ENCODE measurements at regions of chr15 and their contacts with region 1.

Region 1: GRCh38 chr15:41660235-41661077 is at the start of gene MGA:
- DNase-seq: peak; percentile 90 to 94 (median 92)
- H3K4me3 ChIP-seq: peak within 1 kb of the TSS; percentile 71 to 72
- H3K4me3 Mint-ChIP-seq: peak within 1 kb of the TSS; percentile 84 to 96 (median 94)
- H3K27ac ChIP-seq: peak within 1 kb of the TSS; percentile 67
- H3K27ac Mint-ChIP-seq: peak within 1 kb of the TSS; percentile 91 to 99 (median 97)
- H3K4me1 ChIP-seq: peaks cover 59% of the 10 kb centered on the region
- H3K4me1 Mint-ChIP-seq: peaks cover 30 to 65% (median 43%) of the 10 kb centered on the region in 4 donors
- H3K27me3 ChIP-seq: no peaks in the 10 kb centered on the region
- H3K27me3 Mint-ChIP-seq: peaks cover 0 to 1% of the 10 kb centered on the region in 2 donors
- total RNA-seq, gene MGA: 70.1 to 74.9 TPM

Region 2: GRCh38 chr15:40564591-40565332 is 1095.7 kb before region 1 on chr15 and contains the start of gene CCDC32:
- CTCF ChIA-PET with region 1: no interaction called
- POLR2A ChIA-PET with region 1: no interaction called
- intact Hi-C with region 1: loop called (anchors 5 kb)
- DNase-seq: peak; percentile 93 to 98 (median 96)
- H3K4me3 ChIP-seq: peak within 1 kb of the TSS; percentile 97 to 98
- H3K4me3 Mint-ChIP-seq: peak within 1 kb of the TSS; percentile 95 to 98 (median 97)
- H3K27ac ChIP-seq: peak within 1 kb of the TSS; percentile 92
- H3K27ac Mint-ChIP-seq: peak within 1 kb of the TSS; percentile 89 to 99 (median 98)
- H3K4me1 ChIP-seq: peaks cover 34% of the 10 kb centered on the region
- H3K4me1 Mint-ChIP-seq: peaks cover 26 to 65% (median 42%) of the 10 kb centered on the region in 4 donors
- H3K27me3 ChIP-seq: no peaks in the 10 kb centered on the region
- H3K27me3 Mint-ChIP-seq: no peaks in the 10 kb centered on the region
- total RNA-seq, gene CCDC32: 31.7 to 32.4 TPM

Region 3: DNA sequence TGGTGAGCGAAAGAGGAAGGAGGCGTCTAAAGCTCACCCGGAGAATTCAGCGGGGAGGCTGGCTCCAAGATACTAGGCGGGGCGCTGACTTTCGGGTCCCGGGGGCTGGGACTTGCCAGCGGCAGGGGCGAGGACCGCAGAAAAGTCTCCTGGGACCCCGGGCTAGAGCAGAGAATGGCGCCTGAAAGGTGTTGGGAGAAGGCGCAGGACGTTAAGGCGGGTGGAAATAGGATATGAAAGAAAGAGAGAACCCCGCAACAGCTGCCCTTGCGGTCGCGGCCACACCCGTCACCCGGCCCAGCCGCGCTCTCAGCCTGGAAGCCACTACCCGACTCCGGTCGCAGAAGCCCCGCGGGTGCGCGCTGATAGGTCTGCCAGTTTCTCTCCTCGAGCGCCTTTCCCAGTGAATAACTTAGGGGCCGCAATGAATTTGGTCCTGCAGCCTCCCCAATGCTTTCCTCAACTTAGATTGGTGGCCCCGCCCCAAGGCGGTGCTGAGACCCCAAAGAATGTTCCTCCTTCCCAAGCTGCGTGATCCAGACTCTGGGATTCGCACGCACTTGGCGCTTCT is 147.4 kb before region 1 on chr15:
- CTCF ChIA-PET with region 1: no interaction called
- POLR2A ChIA-PET with region 1: no interaction called
- intact Hi-C with region 1: no loop called
- DNase-seq: peak in 2 of 5 donors; percentile 26 to 38
- H3K4me3 ChIP-seq: peak overlapping the region; percentile 52 to 57
- H3K4me3 Mint-ChIP-seq: peak overlapping the region; percentile 81 to 86 (median 83)
- H3K27ac ChIP-seq: no peak overlapping the region
- H3K27ac Mint-ChIP-seq: peak overlapping the region in 6 of 7 donors; percentile 65 to 75 (median 68)
- H3K4me1 ChIP-seq: peaks cover 27% of the 10 kb centered on the region
- H3K4me1 Mint-ChIP-seq: peaks cover 6 to 33% (median 24%) of the 10 kb centered on the region in 4 donors
- H3K27me3 ChIP-seq: peaks cover 17% of the 10 kb centered on the region
- H3K27me3 Mint-ChIP-seq: peaks cover 10 to 13% of the 10 kb centered on the region in 2 donors

Region 4: DNA sequence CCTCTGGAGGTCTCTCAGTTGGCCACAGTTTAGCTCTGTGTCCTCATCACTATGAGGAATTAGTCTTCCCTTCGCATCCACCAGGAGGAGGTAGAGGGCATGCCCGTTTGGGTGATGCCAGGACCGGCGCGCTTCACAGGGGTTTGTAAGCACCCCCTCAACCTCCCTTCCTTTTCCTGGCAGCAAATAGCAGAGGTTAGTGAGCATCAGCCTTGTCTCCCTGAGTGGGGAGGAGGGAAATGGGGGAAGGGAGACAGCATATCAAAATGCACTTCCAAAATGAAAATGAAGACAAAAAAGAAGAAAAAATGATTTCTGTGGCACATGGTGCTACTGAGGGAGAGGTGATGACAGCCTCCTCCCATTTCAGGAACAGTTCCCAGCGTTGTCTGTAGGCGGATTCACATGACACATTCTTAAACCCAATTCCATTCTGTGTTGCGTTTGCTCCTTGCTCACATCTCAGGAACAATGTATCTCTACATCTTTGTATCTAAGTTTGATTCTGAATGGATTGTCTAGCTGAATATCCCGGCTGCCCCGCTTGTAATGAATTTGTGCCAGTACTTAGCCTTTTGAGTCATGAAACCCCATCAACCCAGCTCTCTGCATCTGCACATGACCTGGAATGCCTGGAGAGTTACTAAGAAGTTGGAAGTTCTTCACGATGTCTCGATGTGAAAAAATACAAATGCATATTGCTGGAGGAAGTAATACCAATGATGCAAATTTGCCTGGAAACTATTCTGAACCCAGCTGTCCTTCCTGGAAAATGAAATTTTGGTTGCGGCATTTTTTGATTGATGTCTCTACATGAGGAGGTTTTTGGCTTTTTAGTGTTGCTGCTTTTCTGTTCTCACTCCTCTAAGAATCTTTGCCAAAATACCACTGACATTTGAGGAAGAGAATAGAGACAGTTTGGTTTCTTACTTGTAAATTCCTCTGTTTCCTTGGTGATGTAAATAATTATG is 56.2 kb before region 1 on chr15:
- CTCF ChIA-PET with region 1: interaction called, 22 read pairs
- POLR2A ChIA-PET with region 1: interaction called, 6 read pairs
- intact Hi-C with region 1: loop called (anchors 1 kb)
- DNase-seq: peak; percentile 53 to 58 (median 53)
- H3K4me3 ChIP-seq: peak overlapping the region in 1 of 2 donors; percentile 36
- H3K4me3 Mint-ChIP-seq: peak overlapping the region; percentile 49 to 87 (median 78)
- H3K27ac ChIP-seq: no peak overlapping the region
- H3K27ac Mint-ChIP-seq: peak overlapping the region in 1 of 7 donors; percentile 68
- H3K4me1 ChIP-seq: peaks cover 6% of the 10 kb centered on the region
- H3K4me1 Mint-ChIP-seq: peaks cover 8 to 10% (median 9%) of the 10 kb centered on the region in 4 donors
- H3K27me3 ChIP-seq: peaks cover 3% of the 10 kb centered on the region
- H3K27me3 Mint-ChIP-seq: peaks cover 13 to 15% of the 10 kb centered on the region in 2 donors

Region 5: DNA sequence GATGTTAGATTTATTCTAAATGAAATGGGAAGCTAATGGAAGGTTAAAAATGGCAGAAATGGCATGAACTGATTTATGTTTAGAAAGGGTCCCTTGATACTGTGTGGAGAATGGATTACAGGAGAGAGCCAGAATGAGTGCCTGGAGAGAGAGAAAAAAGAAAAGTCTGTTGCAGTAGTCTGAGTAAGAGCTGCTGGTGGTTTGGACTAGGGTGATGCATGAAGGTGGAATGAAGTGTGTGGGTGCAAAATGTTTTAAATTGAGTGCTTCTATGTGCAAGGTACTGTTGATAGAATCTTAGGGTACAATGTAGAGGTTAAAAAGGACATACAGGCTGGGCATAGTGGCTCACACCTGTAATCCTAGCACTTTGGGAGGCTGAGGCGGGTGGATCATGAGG is 11.7 kb before region 1 on chr15:
- CTCF ChIA-PET with region 1: interaction called, 4 read pairs
- POLR2A ChIA-PET with region 1: interaction called, 10 read pairs
- intact Hi-C with region 1: no loop called
- DNase-seq: no peak
- H3K4me3 ChIP-seq: no peak overlapping the region
- H3K4me3 Mint-ChIP-seq: no peak overlapping the region
- H3K27ac ChIP-seq: no peak overlapping the region
- H3K27ac Mint-ChIP-seq: no peak overlapping the region
- H3K4me1 ChIP-seq: no peaks in the 10 kb centered on the region
- H3K4me1 Mint-ChIP-seq: peaks cover 0 to 1% (median 0%) of the 10 kb centered on the region in 4 donors
- H3K27me3 ChIP-seq: no peaks in the 10 kb centered on the region
- H3K27me3 Mint-ChIP-seq: no peaks in the 10 kb centered on the region

Region 6: DNA sequence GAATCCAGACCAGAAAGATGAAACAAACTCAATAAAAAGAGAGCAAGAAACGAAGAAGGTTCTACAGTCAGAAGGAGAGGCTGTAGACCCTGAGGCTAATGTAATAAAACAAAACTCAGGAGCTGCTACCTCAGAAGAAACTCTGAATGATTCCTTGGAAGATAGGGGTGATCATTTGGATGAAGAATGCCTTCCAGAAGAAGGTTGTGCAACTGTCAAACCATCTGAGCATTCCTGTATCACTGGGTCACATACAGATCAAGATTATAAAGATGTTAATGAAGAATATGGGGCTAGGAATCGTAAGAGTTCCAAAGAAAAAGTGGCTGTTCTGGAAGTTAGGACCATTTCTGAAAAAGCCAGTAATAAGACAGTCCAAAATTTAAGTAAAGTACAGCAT is 89.1 kb after region 1 on chr15:
- CTCF ChIA-PET with region 1: no interaction called
- POLR2A ChIA-PET with region 1: no interaction called
- intact Hi-C with region 1: no loop called
- DNase-seq: no peak
- H3K4me3 ChIP-seq: no peak overlapping the region
- H3K4me3 Mint-ChIP-seq: no peak overlapping the region
- H3K27ac ChIP-seq: no peak overlapping the region
- H3K27ac Mint-ChIP-seq: peak overlapping the region in 3 of 7 donors; percentile 14 to 33 (median 31)
- H3K4me1 ChIP-seq: no peaks in the 10 kb centered on the region
- H3K4me1 Mint-ChIP-seq: peaks cover 0 to 4% (median 1%) of the 10 kb centered on the region in 4 donors
- H3K27me3 ChIP-seq: no peaks in the 10 kb centered on the region
- H3K27me3 Mint-ChIP-seq: no peaks in the 10 kb centered on the region

Region 7: DNA sequence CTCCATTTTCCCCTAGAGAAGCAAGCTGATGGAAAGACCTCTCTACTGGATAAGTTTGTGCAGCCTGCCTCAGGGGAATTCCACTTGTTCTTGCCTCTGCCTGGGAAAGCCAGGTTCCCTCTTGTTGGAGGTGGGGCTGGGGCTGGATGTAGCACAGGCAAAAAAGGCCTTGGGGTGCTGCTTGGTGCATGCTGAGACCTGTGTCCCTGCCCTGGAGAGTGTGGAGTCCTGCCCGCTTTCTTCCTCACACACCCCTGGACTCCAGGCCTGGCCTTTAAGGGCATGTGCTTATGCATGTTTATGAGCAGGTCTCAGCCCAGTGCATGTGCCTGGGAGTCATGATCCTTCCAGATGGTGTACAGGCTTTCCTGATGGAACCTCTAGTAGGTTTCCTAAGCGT is 143.9 kb after region 1 on chr15:
- CTCF ChIA-PET with region 1: no interaction called
- POLR2A ChIA-PET with region 1: no interaction called
- intact Hi-C with region 1: no loop called
- DNase-seq: no peak
- H3K4me3 ChIP-seq: no peak overlapping the region
- H3K4me3 Mint-ChIP-seq: no peak overlapping the region
- H3K27ac ChIP-seq: no peak overlapping the region
- H3K27ac Mint-ChIP-seq: peak overlapping the region in 2 of 7 donors; percentile 10 to 38
- H3K4me1 ChIP-seq: no peaks in the 10 kb centered on the region
- H3K4me1 Mint-ChIP-seq: peaks cover 0 to 8% (median 2%) of the 10 kb centered on the region in 4 donors
- H3K27me3 ChIP-seq: no peaks in the 10 kb centered on the region
- H3K27me3 Mint-ChIP-seq: no peaks in the 10 kb centered on the region

Region 8: DNA sequence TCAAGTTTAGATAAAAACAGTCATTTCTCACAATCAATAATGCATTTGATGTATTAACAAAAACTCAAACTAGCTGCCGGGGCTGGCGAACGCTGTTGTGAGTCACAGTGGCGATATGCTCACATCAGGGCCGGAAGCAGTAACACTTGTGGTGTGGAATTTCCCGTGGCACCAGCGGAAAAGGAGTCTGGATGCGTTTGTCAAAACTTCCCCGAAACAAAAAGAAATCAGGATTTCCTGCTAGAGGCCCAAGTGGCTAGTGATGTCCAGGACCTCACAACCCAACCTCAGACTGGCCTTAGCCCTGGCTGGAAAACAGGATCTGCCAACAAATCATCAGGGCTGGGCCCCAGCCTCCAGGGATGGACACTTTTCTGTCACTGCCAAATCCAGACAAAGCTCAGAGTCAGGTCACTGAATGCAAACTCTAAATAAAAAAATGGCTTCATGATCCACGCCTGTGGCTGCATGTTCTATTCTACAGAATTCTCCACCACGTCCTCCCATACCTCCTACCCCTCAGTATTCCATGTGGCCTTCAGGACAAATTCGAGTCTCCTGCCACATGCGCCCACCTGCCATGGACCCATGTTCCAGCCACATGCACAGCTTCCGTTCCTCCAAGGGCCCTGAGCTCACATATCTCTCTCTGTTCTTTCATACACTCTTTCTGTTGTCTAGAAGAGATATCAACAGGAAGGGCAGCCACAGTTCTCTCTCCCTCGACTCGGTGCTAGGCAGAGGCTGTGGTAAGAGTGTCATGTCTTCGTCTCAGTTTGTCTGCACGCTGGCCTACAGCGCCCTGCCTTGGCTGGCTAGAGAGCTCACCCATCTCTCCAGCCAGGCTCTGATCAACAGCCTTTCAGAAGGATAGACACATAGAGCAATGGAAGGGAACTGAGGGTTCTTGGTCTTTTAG is 276.5 kb after region 1 on chr15:
- CTCF ChIA-PET with region 1: interaction called, 6 read pairs
- POLR2A ChIA-PET with region 1: interaction called, 17 read pairs
- intact Hi-C with region 1: no loop called
- DNase-seq: peak; percentile 80 to 95 (median 81)
- H3K4me3 ChIP-seq: peak overlapping the region in 1 of 2 donors; percentile 12
- H3K4me3 Mint-ChIP-seq: peak overlapping the region; percentile 77 to 95 (median 89)
- H3K27ac ChIP-seq: peak overlapping the region; percentile 97
- H3K27ac Mint-ChIP-seq: peak overlapping the region; percentile 94 to 100 (median 100)
- H3K4me1 ChIP-seq: peaks cover 75% of the 10 kb centered on the region
- H3K4me1 Mint-ChIP-seq: peaks cover 46 to 76% (median 67%) of the 10 kb centered on the region in 4 donors
- H3K27me3 ChIP-seq: no peaks in the 10 kb centered on the region
- H3K27me3 Mint-ChIP-seq: no peaks in the 10 kb centered on the region